Ovary (tissue), 10 donors: ENCODE measurements at regions of chr11 and their contacts with region 1.

Region 1: GRCh38 chr11:68328374-68329091 is 16.1 kb downstream of the LRP5 start:
- DNase-seq: peak in 1 of 5 donors; percentile 57
- H3K4me3 ChIP-seq: no peak overlapping the region
- H3K27ac ChIP-seq: no peak overlapping the region
- H3K4me1 ChIP-seq: peaks cover 22% of the 10 kb centered on the region
- H3K27me3 ChIP-seq: no peaks in the 10 kb centered on the region
- CTCF ChIP-seq: no peak
- EP300 ChIP-seq: no peak
- POLR2A ChIP-seq: no peak

Region 2: GRCh38 chr11:68383976-68384501 is 55.5 kb after region 1 on chr11:
- intact Hi-C with region 1: loop called in 1 of 4 experiments (anchors 10 kb)
- DNase-seq: peak; percentile 57 to 79 (median 74)
- H3K4me3 ChIP-seq: no peak overlapping the region
- H3K27ac ChIP-seq: no peak overlapping the region
- H3K4me1 ChIP-seq: peaks cover 18% of the 10 kb centered on the region
- H3K27me3 ChIP-seq: no peaks in the 10 kb centered on the region
- CTCF ChIP-seq: peak; percentile 72 to 85 (median 73)
- EP300 ChIP-seq: no peak
- POLR2A ChIP-seq: no peak